Posterior cingulate gyrus (tissue), 11 donors: ENCODE measurements at regions of chr17 and their contacts with region 1.

Region 1: DNA sequence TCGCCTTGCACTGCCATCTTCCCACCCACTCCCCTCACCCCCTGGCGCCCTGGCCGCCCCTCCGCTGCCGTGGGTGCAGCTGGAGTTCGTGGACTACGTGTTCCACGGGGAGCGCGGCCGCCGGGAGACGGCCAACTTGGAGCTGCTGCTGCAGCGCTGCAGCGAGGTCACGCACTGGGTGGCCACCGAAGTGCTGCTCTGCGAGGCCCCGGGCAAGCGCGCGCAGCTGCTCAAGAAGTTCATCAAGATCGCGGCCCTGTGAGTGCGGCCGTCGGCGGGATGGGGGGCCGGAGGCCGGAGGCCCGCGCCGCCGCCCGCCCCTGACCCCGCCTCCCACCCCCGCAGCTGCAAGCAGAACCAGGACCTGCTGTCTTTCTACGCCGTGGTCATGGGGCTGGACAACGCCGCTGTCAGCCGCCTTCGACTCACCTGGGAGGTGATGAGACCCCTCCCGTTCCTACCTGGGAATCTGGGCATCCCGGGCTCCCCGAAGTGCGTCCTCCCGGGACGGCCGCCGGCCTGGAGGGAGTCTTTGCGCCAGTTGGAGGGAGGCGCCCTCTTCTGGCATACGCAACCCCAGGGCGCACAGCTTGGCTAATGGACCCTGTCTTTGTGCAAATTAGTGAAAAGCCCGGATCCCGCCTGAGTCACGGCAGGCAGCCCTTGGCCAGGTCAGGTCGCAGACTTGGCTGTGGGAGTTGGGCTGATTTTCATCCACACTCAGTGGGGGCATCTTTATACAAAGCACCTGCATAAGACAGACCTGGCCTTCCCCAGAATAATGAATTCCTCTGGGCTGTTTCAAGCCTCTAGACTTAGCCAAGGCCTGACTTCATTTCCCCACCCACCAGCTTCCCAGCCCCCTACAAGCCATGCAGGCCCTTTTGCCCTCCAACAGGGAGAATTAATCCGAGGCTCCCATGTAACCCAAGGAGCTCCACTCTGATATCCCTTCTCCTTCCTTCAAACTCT is 14.3 kb downstream of the RAPGEFL1 start:
- DNase-seq: peak; percentile 45 to 94 (median 68)

Region 2: DNA sequence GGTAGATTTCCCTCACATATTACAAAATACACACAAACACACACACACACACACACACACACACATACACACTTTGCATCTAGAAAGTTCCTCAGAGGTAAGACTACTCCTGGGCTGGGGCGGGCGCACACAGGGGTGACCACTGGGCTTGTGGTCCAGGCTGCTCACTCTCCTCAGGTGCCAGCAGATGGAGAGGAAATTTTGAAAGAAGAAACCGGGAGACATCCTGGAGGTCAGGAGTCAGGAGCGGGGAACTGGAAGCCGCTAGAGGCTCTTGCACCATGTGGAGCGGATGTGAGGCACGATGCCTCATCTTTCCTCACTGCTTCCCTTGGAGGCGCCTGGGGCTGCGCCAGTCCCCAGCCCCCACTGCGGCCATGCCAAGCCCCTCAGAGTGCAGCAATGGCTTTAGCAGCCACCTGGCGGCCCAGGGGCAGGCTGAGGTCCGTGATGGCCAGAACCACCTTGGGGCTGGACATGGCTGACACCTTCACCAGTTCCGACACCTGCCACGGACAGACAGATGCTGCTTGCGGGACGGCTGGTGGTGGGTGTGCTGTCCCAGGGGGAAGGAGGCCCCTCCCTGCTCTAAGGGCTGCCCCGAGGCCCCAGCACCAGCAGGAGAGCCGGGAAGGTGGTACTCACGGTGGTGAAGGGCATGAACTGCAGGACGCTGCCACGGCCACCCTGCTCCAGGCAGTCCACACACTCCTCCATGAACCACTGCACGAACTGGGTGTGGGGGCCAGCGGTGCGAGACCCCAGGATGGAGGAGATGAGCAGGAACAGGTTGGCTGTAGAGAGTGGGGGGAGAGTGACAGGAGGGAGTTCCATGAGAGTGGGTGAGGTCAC is 172.2 kb before region 1 on chr17:
- intact Hi-C with region 1: loop called (anchors 5 kb)
- DNase-seq: peak in 2 of 10 donors; percentile 76